Left ventricle myocardium inferior (tissue), 1 donor: ENCODE measurements at regions of chr3 and their contacts with region 1.

Region 1: DNA sequence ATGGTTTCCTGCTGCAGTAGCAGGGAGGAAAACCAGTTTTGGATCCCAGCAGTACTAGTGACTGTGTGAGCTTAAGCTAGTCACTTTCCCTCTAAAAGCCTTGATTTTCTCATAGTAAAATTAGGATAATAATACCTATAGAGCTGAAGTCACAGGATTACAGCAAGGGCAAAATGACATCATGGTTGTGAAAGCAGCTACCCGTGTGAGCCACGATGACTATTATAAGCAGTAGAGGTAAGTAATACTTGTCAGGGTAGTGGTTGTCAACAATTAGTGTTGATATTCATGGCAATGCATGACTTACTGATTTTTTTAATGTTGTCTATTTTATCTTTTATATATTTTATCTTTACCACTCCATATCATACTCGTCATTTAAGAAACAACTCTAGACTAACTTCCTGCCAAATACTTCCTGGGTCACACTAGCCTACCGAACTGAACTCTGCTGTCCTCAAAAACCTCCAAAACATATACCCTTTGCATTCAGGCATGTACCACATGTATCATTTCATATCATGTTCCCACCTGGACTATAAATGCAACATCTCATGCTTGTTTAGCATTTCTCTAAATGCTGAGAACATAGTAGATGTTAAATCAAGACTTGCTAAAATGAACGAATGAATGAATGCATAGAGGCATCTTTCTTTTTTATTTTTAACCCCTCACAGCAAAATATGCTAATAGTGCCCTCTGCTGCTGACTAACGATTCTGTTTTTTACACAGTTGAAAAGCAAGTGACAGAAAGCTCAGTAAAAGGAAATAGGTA is 172.6 kb downstream of the P3H2 start:
- DNase-seq: no peak
- H3K4me3 ChIP-seq: no peak overlapping the region
- H3K27ac ChIP-seq: no peak overlapping the region
- H3K4me1 ChIP-seq: no peaks in the 10 kb centered on the region
- H3K27me3 ChIP-seq: peaks cover 29% of the 10 kb centered on the region
- CTCF ChIP-seq: peak; percentile 67

Region 2: GRCh38 chr3:189270248-189270832 is 677.8 kb before region 1 on chr3:
- intact Hi-C with region 1: loop called (anchors 10 kb)
- DNase-seq: peak; percentile 19
- H3K4me3 ChIP-seq: no peak overlapping the region
- H3K27ac ChIP-seq: no peak overlapping the region
- H3K4me1 ChIP-seq: no peaks in the 10 kb centered on the region
- H3K27me3 ChIP-seq: no peaks in the 10 kb centered on the region
- CTCF ChIP-seq: peak; percentile 63

Region 3: GRCh38 chr3:189824629-189825312 is 123.4 kb before region 1 on chr3:
- intact Hi-C with region 1: no loop called
- DNase-seq: no peak
- H3K4me3 ChIP-seq: no peak overlapping the region
- H3K27ac ChIP-seq: no peak overlapping the region
- H3K4me1 ChIP-seq: no peaks in the 10 kb centered on the region
- H3K27me3 ChIP-seq: no peaks in the 10 kb centered on the region
- CTCF ChIP-seq: no peak

Region 4: GRCh38 chr3:189853906-189854305 is 94.2 kb before region 1 on chr3:
- intact Hi-C with region 1: no loop called
- DNase-seq: no peak
- H3K4me3 ChIP-seq: no peak overlapping the region
- H3K27ac ChIP-seq: no peak overlapping the region
- H3K4me1 ChIP-seq: peaks cover 4% of the 10 kb centered on the region
- H3K27me3 ChIP-seq: no peaks in the 10 kb centered on the region
- CTCF ChIP-seq: no peak